Calu3 (cell line): ENCODE measurements at regions of chr20 and their contacts with region 1.

Region 1: GRCh38 chr20:768426-768978 is at the start of gene SLC52A3:
- DNase-seq: peak; percentile 85
- H3K4me3 Mint-ChIP-seq: peak within 1 kb of the TSS; percentile 73
- H3K27ac Mint-ChIP-seq: peak within 1 kb of the TSS; percentile 94
- H3K4me1 Mint-ChIP-seq: peaks cover 12% of the 10 kb centered on the region
- H3K27me3 Mint-ChIP-seq: no peaks in the 10 kb centered on the region
- CTCF ChIP-seq: peak; percentile 41
- total RNA-seq, gene SLC52A3: 11.1 TPM in 2 replicates

Region 2: DNA sequence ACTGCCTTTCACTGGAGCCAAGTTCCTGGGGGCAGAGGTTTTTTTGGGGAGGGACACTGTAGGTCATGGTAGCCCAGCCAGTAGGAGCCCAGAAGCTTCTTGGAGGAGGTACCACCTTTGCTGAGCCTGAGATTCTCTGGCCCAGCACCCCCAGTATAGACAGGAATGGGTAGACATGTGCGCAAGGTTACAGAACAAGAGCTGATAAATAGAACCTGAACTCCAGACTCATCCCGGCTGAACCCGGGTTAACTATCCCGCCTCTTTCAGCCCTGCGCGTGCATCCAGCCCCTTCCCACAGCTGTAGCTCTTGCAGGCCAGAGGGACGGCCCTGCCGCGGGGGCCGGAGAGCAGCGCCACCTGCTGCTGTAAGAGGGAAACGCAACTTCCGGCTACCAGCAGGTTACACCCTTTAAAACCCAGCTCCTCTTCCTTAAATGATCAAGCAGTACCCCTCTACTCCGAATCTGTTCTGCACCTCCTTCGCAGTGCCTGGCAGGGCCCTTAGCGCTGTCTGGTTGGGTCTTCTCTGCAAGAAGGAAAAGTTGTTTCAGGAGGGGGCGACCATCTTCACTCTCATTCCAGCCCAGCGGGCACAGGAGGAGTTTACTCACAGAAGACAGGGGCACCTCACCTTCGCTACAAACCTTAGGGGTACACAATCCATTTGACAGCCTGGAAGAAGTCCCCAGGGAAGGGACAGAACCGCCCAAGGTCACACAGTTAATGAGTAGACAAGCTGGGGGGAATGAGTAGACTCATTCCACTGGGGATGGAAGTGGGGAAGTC is 123.0 kb before region 1 on chr20:
- CTCF ChIA-PET with region 1: interaction called, 16 read pairs
- intact Hi-C with region 1: no loop called
- DNase-seq: peak; percentile 76
- H3K4me3 Mint-ChIP-seq: no peak overlapping the region
- H3K27ac Mint-ChIP-seq: no peak overlapping the region
- H3K4me1 Mint-ChIP-seq: no peaks in the 10 kb centered on the region
- H3K27me3 Mint-ChIP-seq: peaks cover 4% of the 10 kb centered on the region
- CTCF ChIP-seq: peak; percentile 81

Region 3: GRCh38 chr20:740141-740540 is 28.4 kb before region 1 on chr20:
- CTCF ChIA-PET with region 1: interaction called, 53 read pairs
- intact Hi-C with region 1: loop called (anchors 1 kb)
- DNase-seq: peak; percentile 54
- H3K4me3 Mint-ChIP-seq: no peak overlapping the region
- H3K27ac Mint-ChIP-seq: no peak overlapping the region
- H3K4me1 Mint-ChIP-seq: peaks cover 9% of the 10 kb centered on the region
- H3K27me3 Mint-ChIP-seq: peaks cover 10% of the 10 kb centered on the region
- CTCF ChIP-seq: no peak

Region 4: GRCh38 chr20:753136-753535 is 15.4 kb before region 1 on chr20:
- CTCF ChIA-PET with region 1: interaction called, 10 read pairs
- intact Hi-C with region 1: no loop called
- DNase-seq: no peak
- H3K4me3 Mint-ChIP-seq: no peak overlapping the region
- H3K27ac Mint-ChIP-seq: no peak overlapping the region
- H3K4me1 Mint-ChIP-seq: peaks cover 8% of the 10 kb centered on the region
- H3K27me3 Mint-ChIP-seq: no peaks in the 10 kb centered on the region
- CTCF ChIP-seq: no peak